Common myeloid progenitor, CD34-positive (primary cell): ENCODE measurements at regions of chr11 and their contacts with region 1.

Region 1: GRCh38 chr11:8577791-8578581 is 16.0 kb downstream of the STK33 start:
- DNase-seq: no peak
- H3K4me3 ChIP-seq: no peak overlapping the region
- H3K27ac ChIP-seq: no peak overlapping the region
- H3K4me1 ChIP-seq: no peaks in the 10 kb centered on the region
- H3K27me3 ChIP-seq: no peaks in the 10 kb centered on the region

Region 2: GRCh38 chr11:8566613-8567210 is 11.3 kb before region 1 on chr11:
- CTCF ChIA-PET with region 1: interaction called, 20 read pairs
- POLR2A ChIA-PET with region 1: no interaction called
- DNase-seq: peak; percentile 44 to 72 (median 67)
- H3K4me3 ChIP-seq: no peak overlapping the region
- H3K27ac ChIP-seq: no peak overlapping the region
- H3K4me1 ChIP-seq: no peaks in the 10 kb centered on the region
- H3K27me3 ChIP-seq: no peaks in the 10 kb centered on the region

Region 3: DNA sequence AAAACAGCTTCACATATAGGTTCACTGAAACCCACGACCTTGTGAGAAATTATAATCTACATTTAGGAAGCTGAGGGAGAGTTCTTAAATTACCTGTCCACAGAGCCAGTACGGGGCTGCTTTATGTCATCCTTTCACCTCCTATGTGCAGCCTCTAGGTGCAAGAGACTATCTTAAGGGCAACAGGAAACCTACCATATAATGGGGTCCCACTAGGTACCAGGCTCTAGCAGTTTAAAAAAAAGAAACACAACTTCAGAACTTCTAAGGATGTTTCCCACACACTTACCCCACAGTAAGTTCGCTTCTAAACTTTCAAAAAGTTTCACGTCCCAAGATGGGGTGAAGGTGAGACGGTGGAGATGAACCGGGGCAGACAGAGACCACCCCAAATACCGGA is 15.5 kb after region 1 on chr11:
- CTCF ChIA-PET with region 1: no interaction called
- POLR2A ChIA-PET with region 1: no interaction called
- DNase-seq: no peak
- H3K4me3 ChIP-seq: peak overlapping the region; percentile 55 to 87 (median 79)
- H3K27ac ChIP-seq: no peak overlapping the region
- H3K4me1 ChIP-seq: peaks cover 0 to 18% (median 12%) of the 10 kb centered on the region in 4 experiments
- H3K27me3 ChIP-seq: no peaks in the 10 kb centered on the region